WTC11 (cell line): ENCODE measurements at regions of chr5 and their contacts with region 1.

Region 1: GRCh38 chr5:93800988-93801811 is 59.8 kb upstream of the POU5F2 start:
- DNase-seq: no peak
- ATAC-seq: peak; percentile 66
- H3K4me3 Mint-ChIP-seq: no peak overlapping the region
- H3K27ac Mint-ChIP-seq: no peak overlapping the region
- H3K4me1 Mint-ChIP-seq: peaks cover 4% of the 10 kb centered on the region
- H3K27me3 Mint-ChIP-seq: no peaks in the 10 kb centered on the region
- CTCF ChIP-seq: peak; percentile 22; the same call in 1 of the 2 replicates

Region 2: DNA sequence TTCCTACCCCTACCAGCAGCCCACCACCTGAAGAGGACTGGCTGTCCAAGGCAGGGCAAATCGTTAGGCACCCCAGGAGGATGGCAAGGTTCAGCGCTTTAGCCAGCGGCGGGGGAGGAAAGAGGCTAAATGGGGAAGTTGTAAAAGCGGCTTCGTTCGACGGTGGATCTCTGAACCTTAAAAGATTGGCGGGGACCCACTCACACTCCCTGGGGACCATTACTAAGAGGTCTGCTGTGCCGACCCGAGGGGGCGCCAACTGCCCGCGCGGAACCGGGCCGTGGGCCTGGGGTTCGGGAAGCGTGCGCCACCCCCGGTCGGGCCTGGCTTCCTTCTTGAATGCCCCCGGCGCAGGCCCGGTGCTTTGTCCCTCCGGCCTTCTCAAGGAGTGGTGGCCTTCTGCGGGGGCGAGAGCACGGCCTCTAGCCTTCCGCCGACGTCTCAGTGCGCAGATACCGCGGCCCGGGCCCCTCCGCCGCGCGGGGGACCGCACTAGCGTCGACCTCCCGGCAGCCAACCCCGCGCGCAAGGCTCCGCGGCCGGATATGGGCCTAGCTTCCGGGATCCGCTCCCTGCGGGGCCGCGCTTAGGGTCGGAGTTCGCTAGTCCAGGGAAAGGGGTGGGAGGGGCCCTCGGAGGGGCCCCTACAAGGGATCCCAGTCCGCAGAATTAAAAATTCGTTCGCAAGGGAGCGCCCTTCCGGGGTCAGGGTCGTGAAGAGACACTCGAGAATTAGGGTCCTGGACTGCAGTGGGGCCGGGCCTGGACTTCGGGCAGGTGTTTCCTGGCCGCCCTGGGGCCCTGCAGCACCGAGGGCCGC is 230.7 kb before region 1 on chr5:
- CTCF ChIA-PET with region 1: interaction called, 15 read pairs
- POLR2A ChIA-PET with region 1: no interaction called
- DNase-seq: peak; percentile 73
- ATAC-seq: peak; percentile 62
- H3K4me3 Mint-ChIP-seq: peak overlapping the region; percentile 69
- H3K27ac Mint-ChIP-seq: no peak overlapping the region
- H3K4me1 Mint-ChIP-seq: peaks cover 46% of the 10 kb centered on the region
- H3K27me3 Mint-ChIP-seq: peaks cover 11% of the 10 kb centered on the region
- CTCF ChIP-seq: no peak

Region 3: GRCh38 chr5:93596676-93597461 is 204.3 kb before region 1 on chr5:
- CTCF ChIA-PET with region 1: interaction called, 39 read pairs
- POLR2A ChIA-PET with region 1: no interaction called
- DNase-seq: peak; percentile 81
- ATAC-seq: peak; percentile 82
- H3K4me3 Mint-ChIP-seq: peak overlapping the region; percentile 65
- H3K27ac Mint-ChIP-seq: no peak overlapping the region
- H3K4me1 Mint-ChIP-seq: peaks cover 37% of the 10 kb centered on the region
- H3K27me3 Mint-ChIP-seq: no peaks in the 10 kb centered on the region
- CTCF ChIP-seq: no peak

Region 4: GRCh38 chr5:93607367-93608258 is 193.6 kb before region 1 on chr5:
- CTCF ChIA-PET with region 1: interaction called, 22 read pairs
- POLR2A ChIA-PET with region 1: interaction called, 3 read pairs
- DNase-seq: peak; percentile 58
- ATAC-seq: peak; percentile 83
- H3K4me3 Mint-ChIP-seq: peak overlapping the region; percentile 53
- H3K27ac Mint-ChIP-seq: no peak overlapping the region
- H3K4me1 Mint-ChIP-seq: peaks cover 63% of the 10 kb centered on the region
- H3K27me3 Mint-ChIP-seq: no peaks in the 10 kb centered on the region
- CTCF ChIP-seq: no peak

Region 5: GRCh38 chr5:93620487-93621326 is 180.5 kb before region 1 on chr5:
- CTCF ChIA-PET with region 1: interaction called, 20 read pairs
- POLR2A ChIA-PET with region 1: no interaction called
- DNase-seq: peak; percentile 75
- ATAC-seq: peak; percentile 86
- H3K4me3 Mint-ChIP-seq: peak overlapping the region; percentile 91
- H3K27ac Mint-ChIP-seq: no peak overlapping the region
- H3K4me1 Mint-ChIP-seq: peaks cover 28% of the 10 kb centered on the region
- H3K27me3 Mint-ChIP-seq: peaks cover 38% of the 10 kb centered on the region
- CTCF ChIP-seq: no peak

Region 6: DNA sequence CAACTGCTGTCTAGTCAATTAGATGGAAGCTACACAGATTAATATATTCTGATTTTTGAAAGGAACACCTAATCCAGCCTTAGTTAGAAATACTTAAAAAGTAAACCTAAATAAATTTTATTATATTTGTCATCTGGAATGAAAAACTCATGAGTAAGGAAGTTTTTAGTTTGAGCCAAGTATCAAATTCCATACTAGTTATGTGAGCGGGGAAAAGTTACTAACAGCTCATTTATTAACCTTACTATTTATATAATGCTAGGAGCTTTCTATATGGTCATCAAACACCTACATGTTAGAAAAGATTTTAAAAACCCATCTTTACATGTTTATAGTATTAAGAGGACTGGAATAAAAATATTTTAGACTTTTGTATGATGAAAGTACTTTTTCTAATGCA is 18.2 kb before region 1 on chr5:
- CTCF ChIA-PET with region 1: interaction called, 12 read pairs
- POLR2A ChIA-PET with region 1: no interaction called
- DNase-seq: no peak
- ATAC-seq: no peak
- H3K4me3 Mint-ChIP-seq: no peak overlapping the region
- H3K27ac Mint-ChIP-seq: no peak overlapping the region
- H3K4me1 Mint-ChIP-seq: no peaks in the 10 kb centered on the region
- H3K27me3 Mint-ChIP-seq: no peaks in the 10 kb centered on the region
- CTCF ChIP-seq: no peak

Region 7: GRCh38 chr5:94288937-94289336 is 487.7 kb after region 1 on chr5:
- CTCF ChIA-PET with region 1: no interaction called
- POLR2A ChIA-PET with region 1: no interaction called
- DNase-seq: no peak
- ATAC-seq: no peak
- H3K4me3 Mint-ChIP-seq: no peak overlapping the region
- H3K27ac Mint-ChIP-seq: no peak overlapping the region
- H3K4me1 Mint-ChIP-seq: peaks cover 6% of the 10 kb centered on the region
- H3K27me3 Mint-ChIP-seq: no peaks in the 10 kb centered on the region; the same call in 1 of the 2 replicates
- CTCF ChIP-seq: no peak